Posterior vena cava (tissue), 2 donors: ENCODE measurements at regions of chr13 and their contacts with region 1.

Region 1: GRCh38 chr13:83248751-83249150 is 633.5 kb downstream of the SLITRK1 start:
- DNase-seq: no peak

Region 2: GRCh38 chr13:81540777-81541176 is 1708.0 kb before region 1 on chr13:
- intact Hi-C with region 1: loop called in 1 of 2 experiments (anchors 5 kb)
- DNase-seq: no peak

Region 3: DNA sequence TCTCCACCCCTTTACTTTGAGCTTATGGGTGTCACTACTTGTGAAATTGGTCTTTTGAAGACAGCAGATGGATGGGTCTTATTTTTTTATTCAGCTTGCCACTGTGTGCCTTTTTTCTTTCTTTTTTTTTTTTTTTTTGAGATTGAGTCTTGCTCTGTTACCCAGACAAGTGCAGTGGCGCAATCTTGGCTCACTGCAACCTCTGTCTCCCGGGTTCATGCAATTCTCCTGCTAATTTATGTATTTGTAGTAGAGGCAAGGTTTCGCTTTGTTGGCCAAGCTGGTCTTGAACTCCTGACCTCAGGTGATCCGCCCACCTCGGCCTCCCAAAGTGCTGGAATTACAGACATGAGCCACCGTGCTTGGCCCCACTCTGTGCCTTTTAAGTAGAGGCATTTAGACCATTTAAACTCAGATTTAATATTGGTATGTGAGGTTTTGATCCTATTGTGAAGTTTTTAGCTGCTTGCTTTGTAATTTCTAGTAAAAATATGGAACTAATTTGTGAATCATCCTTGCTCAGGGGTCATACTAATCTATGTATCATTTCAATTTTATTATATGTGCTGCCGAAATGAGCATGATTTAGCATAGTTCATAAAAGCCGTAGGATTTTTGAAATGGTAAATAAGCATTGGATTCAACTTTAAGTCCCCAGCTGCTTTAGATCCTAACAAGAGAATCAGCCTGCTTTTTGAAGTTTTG is 49.0 kb after region 1 on chr13:
- intact Hi-C with region 1: loop called in 1 of 2 experiments (anchors 2 kb)
- DNase-seq: no peak